Activated T-helper 2 cell treated with anti-CD3 and anti-CD28 coated beads, Interferon-gamma antibody, Interleukin-2, Interleukin-4, amounts not matched to agents 10 μg/mL and 5 μg/mL and 100 μg/mL, durations not matched to agents 14 hours and 24 hours and 36 hours (primary cell): ENCODE measurements at regions of chr18 and their contacts with region 1.

Region 1: GRCh38 chr18:49161627-49162026 is 210.9 kb upstream of the SMAD7 start:
- DNase-seq: peak; percentile 41
- H3K4me3 Mint-ChIP-seq: no peak overlapping the region
- H3K27ac Mint-ChIP-seq: no peak overlapping the region
- H3K4me1 Mint-ChIP-seq: peaks cover 22% of the 10 kb centered on the region
- H3K27me3 Mint-ChIP-seq: peaks cover 4% of the 10 kb centered on the region

Region 2: GRCh38 chr18:49041435-49042245 is 120.0 kb before region 1 on chr18:
- intact Hi-C with region 1: no loop called
- DNase-seq: no peak
- H3K4me3 Mint-ChIP-seq: no peak overlapping the region
- H3K27ac Mint-ChIP-seq: no peak overlapping the region
- H3K4me1 Mint-ChIP-seq: peaks cover 6% of the 10 kb centered on the region
- H3K27me3 Mint-ChIP-seq: no peaks in the 10 kb centered on the region

Region 3: DNA sequence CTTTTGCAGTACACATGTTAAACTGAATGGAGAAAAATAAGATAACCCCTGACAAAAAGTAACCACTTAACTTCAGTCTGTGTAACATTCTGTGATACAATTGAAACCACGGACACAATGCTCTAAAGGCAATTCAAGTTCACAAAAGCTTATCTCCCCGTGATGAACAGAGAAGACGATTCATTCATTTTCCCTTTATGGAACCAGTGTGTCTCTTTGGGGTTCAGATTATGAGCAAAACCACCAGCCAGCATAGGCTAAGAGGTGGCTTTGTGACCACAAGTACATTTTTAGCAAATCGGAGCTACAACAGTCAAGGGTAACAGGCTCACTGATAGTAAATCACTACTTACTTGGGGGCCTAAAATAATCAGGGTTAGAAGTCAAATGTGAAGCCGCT is 90.3 kb before region 1 on chr18:
- intact Hi-C with region 1: loop called (anchors 2 kb)
- DNase-seq: no peak
- H3K4me3 Mint-ChIP-seq: no peak overlapping the region
- H3K27ac Mint-ChIP-seq: peak overlapping the region; percentile 28
- H3K4me1 Mint-ChIP-seq: peaks cover 34% of the 10 kb centered on the region
- H3K27me3 Mint-ChIP-seq: no peaks in the 10 kb centered on the region

Region 4: DNA sequence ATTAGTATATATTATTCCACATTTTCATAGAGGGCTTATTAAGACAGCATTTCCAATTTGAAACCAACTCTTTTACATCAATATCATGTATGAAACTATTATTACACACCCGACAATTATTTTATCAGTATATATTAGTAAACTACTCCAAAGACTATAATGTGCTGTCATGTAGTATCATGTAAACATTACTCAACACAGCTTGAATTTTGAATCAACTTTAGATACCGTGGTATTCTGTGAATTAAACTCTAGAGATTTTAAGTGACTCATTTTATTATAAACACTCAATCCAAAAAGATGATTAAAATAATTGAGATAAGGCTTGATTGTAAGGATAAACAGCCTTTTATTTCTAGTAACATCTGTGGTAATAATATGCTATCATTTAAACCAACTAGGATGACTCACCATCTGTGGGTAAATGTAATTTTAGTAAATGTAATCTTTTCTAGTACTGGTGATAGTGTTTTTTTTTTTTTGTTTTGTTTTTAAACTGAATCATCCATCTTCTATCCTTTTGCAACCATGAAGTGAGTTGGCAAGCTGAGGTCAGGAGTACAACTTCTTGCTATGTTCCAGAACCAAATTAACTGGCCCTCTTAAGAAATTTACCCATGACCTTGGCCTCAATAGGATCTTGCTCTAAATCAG is 66.5 kb before region 1 on chr18:
- intact Hi-C with region 1: loop called (anchors 1 kb)
- DNase-seq: no peak
- H3K4me3 Mint-ChIP-seq: no peak overlapping the region
- H3K27ac Mint-ChIP-seq: no peak overlapping the region
- H3K4me1 Mint-ChIP-seq: peaks cover 12% of the 10 kb centered on the region
- H3K27me3 Mint-ChIP-seq: no peaks in the 10 kb centered on the region

Region 5: GRCh38 chr18:49139766-49140165 is 21.9 kb before region 1 on chr18:
- intact Hi-C with region 1: no loop called
- DNase-seq: no peak
- H3K4me3 Mint-ChIP-seq: no peak overlapping the region
- H3K27ac Mint-ChIP-seq: no peak overlapping the region
- H3K4me1 Mint-ChIP-seq: no peaks in the 10 kb centered on the region
- H3K27me3 Mint-ChIP-seq: no peaks in the 10 kb centered on the region

Region 6: DNA sequence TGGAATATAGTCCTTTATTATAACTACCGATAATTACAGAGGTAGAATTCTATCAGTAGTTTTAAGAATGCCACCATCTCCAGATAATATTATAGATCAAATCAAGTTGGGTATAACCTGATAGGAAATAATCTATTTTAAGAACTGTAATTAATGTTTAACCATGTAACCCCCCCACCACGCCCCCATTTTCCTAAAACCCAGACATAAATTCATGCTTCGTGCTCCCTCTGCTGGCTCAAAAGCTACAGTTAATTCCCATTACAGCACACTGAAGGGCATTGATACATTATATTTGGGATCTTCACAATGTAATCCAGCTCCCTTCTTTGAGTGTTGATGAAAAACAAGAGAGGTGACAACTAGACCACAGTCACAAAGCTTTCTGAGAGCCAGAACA is 17.1 kb after region 1 on chr18:
- intact Hi-C with region 1: loop called (anchors 1 kb)
- DNase-seq: no peak
- H3K4me3 Mint-ChIP-seq: no peak overlapping the region
- H3K27ac Mint-ChIP-seq: no peak overlapping the region
- H3K4me1 Mint-ChIP-seq: peaks cover 26% of the 10 kb centered on the region
- H3K27me3 Mint-ChIP-seq: peaks cover 12% of the 10 kb centered on the region

Region 7: GRCh38 chr18:49227441-49228165 is 66.0 kb after region 1 on chr18:
- intact Hi-C with region 1: loop called (anchors 5 kb)
- DNase-seq: peak; percentile 68
- H3K4me3 Mint-ChIP-seq: no peak overlapping the region
- H3K27ac Mint-ChIP-seq: no peak overlapping the region
- H3K4me1 Mint-ChIP-seq: peaks cover 31% of the 10 kb centered on the region
- H3K27me3 Mint-ChIP-seq: no peaks in the 10 kb centered on the region

Region 8: DNA sequence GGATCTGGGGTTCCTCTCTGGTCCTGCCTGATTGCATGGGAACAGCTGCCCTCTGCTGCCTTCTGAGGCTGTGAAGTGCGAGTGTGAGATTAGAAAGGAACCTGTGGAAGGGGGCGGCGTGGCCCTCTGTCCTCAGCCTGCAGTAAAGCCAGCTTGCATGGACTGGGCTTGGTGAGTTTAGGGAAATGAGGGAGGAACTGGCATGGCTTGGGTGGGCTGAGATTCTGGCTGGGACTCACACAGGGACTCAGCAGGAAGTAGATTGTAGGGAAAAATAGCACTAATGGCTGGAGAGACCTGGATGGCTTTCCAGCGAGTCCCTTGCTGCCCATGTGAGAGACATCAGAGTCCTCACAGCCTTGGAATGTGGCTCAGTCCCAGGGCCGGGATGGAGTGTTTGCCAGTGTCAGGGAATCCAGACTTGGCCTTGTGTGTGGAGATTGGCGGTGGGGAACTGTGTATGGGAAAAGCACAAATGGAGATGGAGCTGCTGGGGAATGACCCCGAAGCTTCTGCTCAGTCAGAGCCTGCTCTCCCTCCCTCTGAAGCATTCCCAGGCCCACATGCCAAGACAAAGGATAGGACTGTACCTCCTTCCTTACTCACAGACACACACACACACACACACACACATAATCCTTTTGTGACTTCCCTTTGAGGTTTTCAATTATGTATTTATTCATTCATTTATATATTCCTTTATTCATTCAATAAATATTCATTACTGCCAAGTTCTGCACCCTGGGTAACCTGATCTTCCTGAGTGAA is 536.3 kb after region 1 on chr18:
- intact Hi-C with region 1: no loop called
- DNase-seq: no peak
- H3K4me3 Mint-ChIP-seq: no peak overlapping the region
- H3K27ac Mint-ChIP-seq: no peak overlapping the region
- H3K4me1 Mint-ChIP-seq: no peaks in the 10 kb centered on the region
- H3K27me3 Mint-ChIP-seq: peaks cover 8% of the 10 kb centered on the region